A673 (cell line): ENCODE measurements at regions of chr15 and their contacts with region 1.

Region 1: GRCh38 chr15:55665605-55666227 is 77.2 kb downstream of the PRTG start:
- DNase-seq: no peak
- H3K4me3 ChIP-seq: no peak overlapping the region
- H3K27ac ChIP-seq: no peak overlapping the region
- H3K4me1 ChIP-seq: peaks cover 9% of the 10 kb centered on the region
- H3K27me3 ChIP-seq: no peaks in the 10 kb centered on the region
- CTCF ChIP-seq: no peak

Region 2: GRCh38 chr15:55587321-55588069 is 78.2 kb before region 1 on chr15:
- CTCF ChIA-PET with region 1: no interaction called
- POLR2A ChIA-PET with region 1: interaction called, 30 read pairs
- intact Hi-C with region 1: no loop called
- DNase-seq: peak; percentile 48
- H3K4me3 ChIP-seq: peak overlapping the region; percentile 49
- H3K27ac ChIP-seq: no peak overlapping the region
- H3K4me1 ChIP-seq: no peaks in the 10 kb centered on the region
- H3K27me3 ChIP-seq: peaks cover 42% of the 10 kb centered on the region
- CTCF ChIP-seq: no peak